ENCODE measurements at regions of chr9 and their contacts with region 1.

Region 1: DNA sequence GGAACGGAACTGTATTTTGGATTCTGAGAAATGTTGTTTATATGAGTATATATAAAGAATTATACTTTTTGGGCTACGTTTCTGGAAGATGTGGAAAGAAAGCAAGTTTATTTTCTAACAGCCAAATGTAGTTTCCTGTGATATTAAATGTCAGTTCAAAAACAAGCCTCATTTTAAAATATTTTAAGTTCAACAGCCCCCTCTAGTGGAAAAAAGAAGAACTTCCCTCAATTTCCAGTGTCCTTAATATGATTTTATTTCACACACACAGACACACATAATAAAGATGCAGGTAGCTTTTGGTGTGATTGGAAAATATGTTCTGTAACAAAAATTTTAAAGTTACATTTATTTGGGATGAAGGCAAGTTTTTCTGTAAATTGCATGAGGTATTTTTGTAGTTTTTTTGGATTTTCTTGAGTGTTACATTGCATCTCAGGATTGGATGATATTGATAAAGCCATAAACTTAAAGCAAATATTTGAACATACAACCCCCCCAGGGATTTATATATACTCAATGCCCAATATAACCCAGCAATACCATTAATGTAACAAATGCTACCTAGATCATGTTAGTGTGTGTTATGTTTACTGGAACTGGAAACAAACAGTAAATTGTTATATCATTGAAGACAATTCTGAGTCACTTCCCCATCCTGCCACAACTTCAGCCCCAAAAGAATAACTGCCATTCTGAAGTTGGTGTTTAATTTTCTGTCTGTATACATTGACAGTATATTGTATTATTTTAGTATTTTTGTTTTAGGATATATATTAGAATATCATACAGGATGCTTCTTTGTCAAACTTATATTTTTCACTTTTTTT is 54.0 kb downstream of the CCDC171 start:
- DNase-seq: no peak
- ATAC-seq: peak; percentile 73
- H3K4me3 ChIP-seq: no peak overlapping the region
- H3K27ac ChIP-seq: no peak overlapping the region
- H3K4me1 ChIP-seq: no peaks in the 10 kb centered on the region
- H3K27me3 ChIP-seq: no peaks in the 10 kb centered on the region
- CTCF ChIP-seq: peak; percentile 46 to 68 (median 52)
- EP300 ChIP-seq: no peak
- POLR2A ChIP-seq: no peak
- RAD21 ChIP-seq: peak; percentile 70

Region 2: DNA sequence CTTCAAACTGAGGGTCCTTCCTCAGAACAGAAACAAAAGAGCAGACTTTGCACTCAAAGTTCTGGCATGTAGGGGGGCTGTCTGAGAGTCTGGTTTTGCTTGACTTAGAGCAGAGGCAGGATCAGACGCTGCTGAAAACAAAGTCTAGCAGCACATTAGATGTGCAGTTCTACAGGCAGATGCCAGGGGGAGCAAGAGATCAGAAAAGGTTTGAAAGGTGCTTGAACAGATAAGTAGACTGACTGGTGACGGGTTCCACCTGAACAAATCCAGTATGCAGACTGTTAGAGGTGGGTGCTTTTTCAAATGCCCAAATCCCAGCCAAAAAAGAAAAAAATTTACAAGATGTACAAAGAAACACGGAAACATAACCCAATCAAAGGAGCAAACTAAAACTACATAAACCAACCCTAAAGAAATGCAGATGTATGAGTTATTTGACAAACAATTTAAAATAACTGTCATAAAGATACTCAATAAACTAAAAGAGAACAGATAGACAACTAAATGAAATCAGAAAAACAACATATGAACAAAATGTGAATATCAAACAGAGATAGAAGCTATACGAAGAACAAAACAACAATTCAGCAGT is 501.9 kb before region 1 on chr9:
- CTCF ChIA-PET with region 1: no interaction called
- POLR2A ChIA-PET with region 1: no interaction called
- RAD21 ChIA-PET with region 1: no interaction called
- SMC1A ChIA-PET with region 1: interaction called, 3 read pairs
- in situ Hi-C with region 1: no loop called
- intact Hi-C with region 1: loop called (anchors 10 kb)
- DNase-seq: no peak
- ATAC-seq: peak; percentile 86
- H3K4me3 ChIP-seq: no peak overlapping the region
- H3K27ac ChIP-seq: no peak overlapping the region
- H3K4me1 ChIP-seq: no peaks in the 10 kb centered on the region
- H3K27me3 ChIP-seq: no peaks in the 10 kb centered on the region
- CTCF ChIP-seq: peak; percentile 59 to 78 (median 67)
- EP300 ChIP-seq: no peak
- POLR2A ChIP-seq: no peak
- RAD21 ChIP-seq: peak; percentile 59

Region 3: DNA sequence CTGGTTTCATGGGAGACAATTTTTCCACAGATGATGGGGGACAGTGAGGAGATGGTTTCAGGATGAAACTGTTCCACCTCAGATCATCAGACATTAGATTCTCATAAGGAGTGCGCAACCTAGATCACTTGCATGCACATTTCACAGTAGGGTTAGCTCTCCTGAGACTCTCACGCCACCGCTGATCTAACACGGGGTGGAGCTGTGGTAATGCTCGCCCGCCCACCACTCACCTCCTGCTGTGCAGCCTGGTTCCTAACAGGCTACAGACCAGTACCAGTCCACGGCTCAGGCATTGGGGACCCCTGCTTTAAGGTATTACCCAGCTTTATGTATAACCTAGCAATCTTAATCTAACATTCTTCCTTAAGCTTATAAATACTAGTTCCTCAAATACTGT is 335.5 kb before region 1 on chr9:
- CTCF ChIA-PET with region 1: interaction called, 17 read pairs
- POLR2A ChIA-PET with region 1: no interaction called
- RAD21 ChIA-PET with region 1: no interaction called
- SMC1A ChIA-PET with region 1: interaction called, 8 read pairs
- in situ Hi-C with region 1: no loop called
- intact Hi-C with region 1: loop called (anchors 5 kb)
- DNase-seq: no peak
- ATAC-seq: peak; percentile 69
- H3K4me3 ChIP-seq: no peak overlapping the region
- H3K27ac ChIP-seq: no peak overlapping the region
- H3K4me1 ChIP-seq: no peaks in the 10 kb centered on the region
- H3K27me3 ChIP-seq: no peaks in the 10 kb centered on the region
- CTCF ChIP-seq: no peak
- EP300 ChIP-seq: no peak
- POLR2A ChIP-seq: no peak
- RAD21 ChIP-seq: 0 out of 2 replicates have a peak, but pooled peaks have one; percentile 6

Region 4: GRCh38 chr9:15422372-15423230 is 184.3 kb before region 1 on chr9 and contains the start of gene SNAPC3:
- CTCF ChIA-PET with region 1: interaction called, 3 read pairs
- POLR2A ChIA-PET with region 1: no interaction called
- RAD21 ChIA-PET with region 1: interaction called, 3 read pairs
- SMC1A ChIA-PET with region 1: no interaction called
- in situ Hi-C with region 1: no loop called
- intact Hi-C with region 1: loop called (anchors 5 kb)
- DNase-seq: peak; percentile 81
- ATAC-seq: peak; percentile 95
- H3K4me3 ChIP-seq: peak within 1 kb of the TSS; percentile 86
- H3K27ac ChIP-seq: peak within 1 kb of the TSS; percentile 72
- H3K4me1 ChIP-seq: peaks cover 8% of the 10 kb centered on the region; the same call in 1 of the 2 replicates
- H3K27me3 ChIP-seq: no peaks in the 10 kb centered on the region
- CTCF ChIP-seq: no peak
- EP300 ChIP-seq: peak; percentile 40 to 59; a peak in 2 of 4 replicates
- POLR2A ChIP-seq: peak; percentile 90
- RAD21 ChIP-seq: no peak
- polyA plus RNA-seq, gene SNAPC3: 5.7 to 7.4 TPM

Region 5: GRCh38 chr9:15485836-15486666 is 120.8 kb before region 1 on chr9:
- CTCF ChIA-PET with region 1: interaction called, 3 read pairs
- POLR2A ChIA-PET with region 1: no interaction called
- RAD21 ChIA-PET with region 1: no interaction called
- SMC1A ChIA-PET with region 1: interaction called, 3 read pairs
- in situ Hi-C with region 1: no loop called
- intact Hi-C with region 1: loop called (anchors 1 kb)
- DNase-seq: no peak
- ATAC-seq: peak; percentile 58
- H3K4me3 ChIP-seq: no peak overlapping the region
- H3K27ac ChIP-seq: no peak overlapping the region
- H3K4me1 ChIP-seq: no peaks in the 10 kb centered on the region
- H3K27me3 ChIP-seq: no peaks in the 10 kb centered on the region
- CTCF ChIP-seq: peak; percentile 31 to 46 (median 36); a peak in 5 of 6 replicates
- EP300 ChIP-seq: no peak
- POLR2A ChIP-seq: no peak
- RAD21 ChIP-seq: 0 out of 2 replicates have a peak, but pooled peaks have one; percentile 26

Region 6: GRCh38 chr9:15618540-15619331 is 11.9 kb after region 1 on chr9:
- CTCF ChIA-PET with region 1: interaction called, 10 read pairs
- POLR2A ChIA-PET with region 1: no interaction called
- RAD21 ChIA-PET with region 1: interaction called, 9 read pairs
- SMC1A ChIA-PET with region 1: interaction called, 7 read pairs
- in situ Hi-C with region 1: no loop called
- intact Hi-C with region 1: no loop called
- DNase-seq: no peak
- ATAC-seq: no peak
- H3K4me3 ChIP-seq: no peak overlapping the region
- H3K27ac ChIP-seq: no peak overlapping the region
- H3K4me1 ChIP-seq: no peaks in the 10 kb centered on the region
- H3K27me3 ChIP-seq: no peaks in the 10 kb centered on the region
- CTCF ChIP-seq: no peak
- EP300 ChIP-seq: no peak
- POLR2A ChIP-seq: no peak
- RAD21 ChIP-seq: no peak